Heart left ventricle (tissue), 16 donors: ENCODE measurements at regions of chr19 and their contacts with region 1.

Region 1: DNA sequence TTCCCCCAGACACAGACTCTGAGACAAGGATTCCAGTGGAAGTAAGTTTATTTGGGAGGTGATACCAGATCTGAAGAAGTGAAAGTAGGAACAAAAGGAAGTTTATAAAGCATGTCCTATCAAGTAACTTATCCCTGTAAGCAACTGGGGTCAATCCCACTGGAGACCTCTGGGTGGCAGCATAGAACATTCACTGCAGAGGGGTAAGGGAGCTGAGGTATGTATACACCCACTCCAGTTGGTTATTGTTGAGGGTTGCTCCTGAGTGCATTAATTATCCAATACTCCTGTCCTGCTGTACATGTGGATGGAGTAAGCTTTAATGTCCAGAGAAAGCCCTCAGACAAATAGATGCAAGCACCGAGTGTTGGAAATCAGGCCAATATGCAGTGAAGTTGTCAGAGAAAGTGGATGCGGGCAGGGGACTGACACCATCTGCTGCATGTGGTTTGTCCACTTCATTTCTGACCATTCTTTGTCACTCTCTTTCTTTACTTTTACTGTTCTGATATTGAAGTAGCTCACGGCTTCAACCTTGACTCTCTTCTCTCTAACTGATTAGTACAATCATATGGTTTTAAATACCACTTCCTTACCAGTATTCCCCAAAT is 46.7 kb downstream of the NOTCH3 start:
- DNase-seq: peak in 1 of 5 donors; percentile 46
- ATAC-seq: no peak
- H3K4me3 ChIP-seq: no peak overlapping the region
- H3K27ac ChIP-seq: no peak overlapping the region
- H3K4me1 ChIP-seq: peaks cover 0 to 2% (median 0%) of the 10 kb centered on the region in 12 donors
- H3K27me3 ChIP-seq: no peaks in the 10 kb centered on the region
- CTCF ChIP-seq: peak in 10 of 12 donors; percentile 23 to 54 (median 42)
- POLR2A ChIP-seq: no peak

Region 2: DNA sequence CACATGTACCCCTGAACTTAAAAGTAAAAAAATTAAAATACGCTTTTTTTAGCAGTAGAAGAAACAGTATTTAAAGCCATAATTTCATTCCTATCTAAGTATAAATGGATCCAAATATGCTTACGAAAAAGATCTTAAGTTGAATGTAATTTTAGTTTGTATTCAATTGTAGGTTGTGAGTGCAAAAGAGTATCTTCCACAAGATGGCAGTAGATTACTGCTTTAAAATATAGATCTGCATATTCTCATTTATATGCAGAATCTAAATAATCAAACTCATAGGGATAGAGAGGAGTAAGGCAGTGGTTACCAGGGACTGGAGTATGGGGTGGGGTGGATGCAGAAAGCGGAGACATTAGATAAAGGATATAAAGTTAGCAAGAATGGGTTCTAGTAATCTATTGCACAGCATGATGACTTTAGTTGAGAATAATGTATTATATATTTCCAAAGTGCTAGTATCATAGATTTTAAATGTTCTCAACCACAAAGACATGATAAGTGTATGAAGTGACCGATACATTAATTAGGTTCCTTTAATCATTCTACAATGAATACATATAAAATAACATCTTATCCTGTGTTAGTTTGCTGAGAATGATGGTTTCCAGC is 282.4 kb before region 1 on chr19:
- intact Hi-C with region 1: loop called in 1 of 10 experiments (anchors 5 kb)
- DNase-seq: no peak
- ATAC-seq: no peak
- H3K4me3 ChIP-seq: no peak overlapping the region
- H3K27ac ChIP-seq: no peak overlapping the region
- H3K4me1 ChIP-seq: no peaks in the 10 kb centered on the region
- H3K27me3 ChIP-seq: peaks cover 0 to 11% (median 0%) of the 10 kb centered on the region in 9 donors
- CTCF ChIP-seq: peak in 10 of 12 donors; percentile 10 to 47 (median 28)
- POLR2A ChIP-seq: no peak

Region 3: GRCh38 chr19:15091901-15092753 is 62.0 kb before region 1 on chr19:
- intact Hi-C with region 1: loop called in 9 of 10 experiments (anchors 1 to 2 kb)
- DNase-seq: peak in 1 of 5 donors; percentile 35
- ATAC-seq: peak in 3 of 4 donors; percentile 16 to 54 (median 47)
- H3K4me3 ChIP-seq: peak overlapping the region in 1 of 12 donors; percentile 23
- H3K27ac ChIP-seq: no peak overlapping the region
- H3K4me1 ChIP-seq: peaks cover 0 to 4% (median 0%) of the 10 kb centered on the region in 12 donors
- H3K27me3 ChIP-seq: peaks cover 0 to 12% (median 1%) of the 10 kb centered on the region in 9 donors
- CTCF ChIP-seq: peak; percentile 55 to 81 (median 73)
- POLR2A ChIP-seq: no peak

Region 4: DNA sequence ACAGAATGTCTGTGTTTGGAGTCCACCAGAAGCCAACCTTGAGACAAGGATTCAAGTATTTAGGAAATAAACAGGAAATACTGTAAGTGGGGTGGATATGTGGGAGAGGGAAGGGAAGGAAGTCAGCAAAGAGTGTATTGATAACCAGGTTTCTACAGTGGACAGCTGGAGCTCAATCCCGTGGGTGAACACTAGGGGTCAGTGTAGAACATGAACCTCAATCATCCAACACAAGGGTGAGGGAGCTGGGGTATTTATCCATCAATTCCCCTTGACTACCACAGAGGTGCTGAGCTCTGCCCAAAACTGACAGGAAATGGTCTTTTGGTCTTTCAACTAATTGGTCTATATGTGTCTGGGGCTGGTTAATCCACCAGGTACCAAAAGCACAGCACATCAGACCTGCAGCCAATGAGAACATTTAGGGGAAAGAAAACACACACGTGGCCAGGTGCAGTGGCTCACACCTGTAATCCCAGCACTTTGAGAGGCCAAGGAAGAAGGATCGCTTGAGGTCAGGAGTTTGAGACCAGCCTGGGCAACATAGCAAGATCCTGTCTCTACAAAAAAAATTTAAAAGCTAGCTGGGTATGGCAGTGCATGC is 52.5 kb before region 1 on chr19:
- intact Hi-C with region 1: loop called in 6 of 10 experiments (anchors 2 to 5 kb)
- DNase-seq: no peak
- ATAC-seq: peak in 3 of 4 donors; percentile 53 to 75 (median 71)
- H3K4me3 ChIP-seq: no peak overlapping the region
- H3K27ac ChIP-seq: no peak overlapping the region
- H3K4me1 ChIP-seq: peaks cover 0 to 6% (median under 1%) of the 10 kb centered on the region in 12 donors
- H3K27me3 ChIP-seq: no peaks in the 10 kb centered on the region
- CTCF ChIP-seq: peak; percentile 63 to 79 (median 70)
- POLR2A ChIP-seq: no peak